Activated T-helper 1 cell treated with anti-CD3 and anti-CD28 coated beads, Interleukin-12 subunit alpha, Interleukin-12 subunit beta, Interleukin-2, Interleukin-4 antibody, amounts not matched to agents 30 ng/mL and 10 ng/mL and 1 ng/mL, durations not matched to agents 14 hours and 24 hours and 36 hours (primary cell): ENCODE measurements at regions of chr11 and their contacts with region 1.

Region 1: DNA sequence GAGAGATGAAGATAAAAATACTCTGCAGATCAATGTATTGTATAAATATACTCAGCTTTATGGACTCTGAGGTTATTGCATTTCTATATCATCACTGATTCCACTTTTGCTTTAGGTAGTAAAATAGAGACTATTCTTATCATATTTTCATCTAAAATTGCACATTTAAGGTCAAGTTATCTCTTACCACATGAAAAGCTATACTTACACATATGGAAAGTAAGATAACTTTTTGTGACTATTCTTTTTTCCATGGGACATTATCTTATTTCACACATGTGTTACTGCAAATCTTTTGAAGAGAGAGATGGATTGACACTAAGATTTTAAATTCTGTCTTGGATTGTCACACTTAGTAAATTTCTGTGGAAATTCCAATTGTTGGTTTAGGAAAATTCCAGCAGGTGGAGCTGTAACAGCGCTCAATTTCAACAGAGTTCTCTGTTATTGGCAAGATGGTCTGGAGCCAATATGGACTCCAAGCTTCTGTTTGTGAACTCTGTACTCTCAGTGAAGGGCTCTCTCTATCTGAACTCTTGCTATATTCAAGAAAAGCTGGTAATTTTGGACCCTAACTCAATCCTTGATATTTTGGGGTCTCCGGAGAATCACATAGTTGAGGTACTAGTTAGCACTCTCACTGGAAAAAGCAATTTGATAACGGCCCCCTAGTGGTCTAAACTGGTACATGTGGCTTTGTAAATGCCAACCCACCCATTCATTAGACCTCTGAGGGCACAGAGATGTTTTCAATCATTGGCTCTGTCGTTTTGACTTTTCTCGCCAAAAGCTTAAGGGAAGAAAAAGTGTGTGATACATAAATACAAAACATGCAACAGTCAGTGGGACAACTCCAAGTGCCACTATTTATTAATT is 429.7 kb downstream of the ETS1 start:
- DNase-seq: peak; percentile 44
- H3K4me3 Mint-ChIP-seq: peak overlapping the region; percentile 16
- H3K27ac Mint-ChIP-seq: peak overlapping the region; percentile 66
- H3K4me1 Mint-ChIP-seq: peaks cover 13% of the 10 kb centered on the region
- H3K27me3 Mint-ChIP-seq: peaks cover 16% of the 10 kb centered on the region

Region 2: DNA sequence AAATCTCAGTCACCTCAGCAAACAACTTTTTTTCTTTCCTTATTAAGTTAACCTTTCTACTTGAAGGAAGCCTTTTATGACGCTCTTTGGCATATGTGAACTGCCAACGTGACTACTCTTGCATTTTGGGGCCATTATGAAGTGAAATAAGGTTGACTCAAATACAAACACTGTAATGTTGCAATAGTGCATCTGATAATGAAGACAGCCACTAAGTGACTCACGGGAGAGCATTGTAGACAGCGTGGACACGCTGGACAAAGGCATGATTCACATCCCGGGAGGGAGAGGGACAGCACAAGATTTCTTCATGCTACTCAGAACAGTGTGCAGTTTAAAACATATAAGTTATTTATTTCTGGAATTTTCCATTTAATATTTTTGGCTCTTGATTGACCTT is 131.1 kb before region 1 on chr11:
- intact Hi-C with region 1: loop called (anchors 1 kb)
- DNase-seq: no peak
- H3K4me3 Mint-ChIP-seq: no peak overlapping the region
- H3K27ac Mint-ChIP-seq: no peak overlapping the region
- H3K4me1 Mint-ChIP-seq: peaks cover 4% of the 10 kb centered on the region
- H3K27me3 Mint-ChIP-seq: peaks cover 42% of the 10 kb centered on the region

Region 3: DNA sequence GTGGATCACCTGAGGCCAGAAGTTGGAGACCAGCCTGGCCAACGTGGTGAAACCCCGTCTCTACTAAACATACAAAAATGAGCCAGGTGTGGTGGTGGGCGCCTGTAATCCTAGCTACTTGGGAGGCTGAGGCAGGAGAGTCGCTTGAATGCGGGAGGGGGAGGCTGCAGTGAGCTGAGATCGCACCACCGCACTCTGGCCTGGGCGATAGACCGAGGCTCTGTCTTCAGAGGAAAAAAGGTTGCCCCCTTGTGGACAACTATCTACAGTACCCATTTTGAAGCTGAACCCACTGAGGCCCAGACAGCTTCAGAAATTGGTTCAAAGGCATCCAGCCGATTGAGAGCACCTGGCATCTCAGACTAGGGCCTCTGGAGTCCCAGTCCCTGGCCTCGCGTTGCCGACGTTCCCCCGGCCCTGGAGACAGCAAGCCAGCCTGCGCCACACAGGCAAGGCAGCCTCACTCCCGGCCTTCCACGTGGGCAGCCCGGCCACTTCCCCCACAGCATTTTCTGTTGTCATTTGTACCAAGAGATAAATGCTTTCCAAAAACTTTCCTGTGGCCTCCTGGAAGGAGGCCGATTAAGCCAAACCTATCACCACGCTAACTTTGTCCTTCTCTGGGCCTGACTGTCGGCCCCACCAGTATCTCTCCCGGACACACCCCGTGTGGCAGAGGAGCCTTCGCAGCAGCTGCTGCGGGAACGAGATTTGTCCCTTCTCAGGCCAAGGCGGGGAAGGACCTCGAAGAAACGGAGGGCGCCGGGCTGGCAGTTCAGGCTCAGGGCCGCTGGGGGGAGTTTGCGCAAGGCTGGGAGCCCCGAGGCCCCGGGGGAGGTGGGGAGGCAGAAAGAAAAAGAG is 619.0 kb after region 1 on chr11:
- intact Hi-C with region 1: loop called (anchors 5 kb)
- DNase-seq: no peak
- H3K4me3 Mint-ChIP-seq: no peak overlapping the region
- H3K27ac Mint-ChIP-seq: peak overlapping the region; percentile 45
- H3K4me1 Mint-ChIP-seq: peaks cover 40% of the 10 kb centered on the region
- H3K27me3 Mint-ChIP-seq: no peaks in the 10 kb centered on the region

Region 4: GRCh38 chr11:128859563-128860441 is 702.1 kb after region 1 on chr11:
- intact Hi-C with region 1: loop called (anchors 1 kb)
- DNase-seq: peak; percentile 71
- H3K4me3 Mint-ChIP-seq: no peak overlapping the region
- H3K27ac Mint-ChIP-seq: no peak overlapping the region
- H3K4me1 Mint-ChIP-seq: peaks cover 6% of the 10 kb centered on the region
- H3K27me3 Mint-ChIP-seq: peaks cover 13% of the 10 kb centered on the region